Activated CD4-positive, alpha-beta T cell treated with anti-CD3 and anti-CD28 coated beads for 36 hours (primary cell): ENCODE measurements at regions of chr11 and their contacts with region 1.

Region 1: DNA sequence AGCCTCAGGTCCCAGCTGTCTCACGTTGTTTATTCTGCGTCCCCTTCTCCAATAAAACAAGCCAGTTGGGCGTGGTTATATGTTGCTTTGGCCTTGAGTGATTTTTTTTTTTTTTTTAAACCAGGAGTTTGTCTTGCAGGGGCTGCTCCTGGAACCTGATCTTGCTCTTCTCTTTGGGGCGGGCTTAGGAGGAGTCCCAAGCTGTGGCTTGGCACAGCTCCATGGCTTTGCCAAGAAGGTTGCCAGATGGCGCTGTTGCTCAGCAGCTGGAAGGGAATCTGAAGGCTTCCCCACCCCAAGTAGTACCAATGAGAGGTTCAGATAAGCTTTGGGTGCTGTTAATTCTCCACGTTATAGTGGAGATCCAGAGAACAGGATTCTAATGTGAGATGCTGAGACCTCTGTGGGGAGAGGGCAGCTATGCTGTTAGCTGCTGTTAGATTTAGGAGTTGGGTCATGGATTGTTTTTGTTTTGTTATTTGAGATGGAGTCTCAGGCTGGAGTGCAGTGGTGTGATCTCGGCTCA is 2.0 kb upstream of the FERMT3 start:
- DNase-seq: peak; percentile 90
- ATAC-seq: peak; percentile 30
- H3K4me3 Mint-ChIP-seq: peak overlapping the region; percentile 33
- H3K27ac Mint-ChIP-seq: peak overlapping the region; percentile 79
- H3K4me1 Mint-ChIP-seq: peaks cover 41% of the 10 kb centered on the region
- H3K27me3 Mint-ChIP-seq: no peaks in the 10 kb centered on the region

Region 2: GRCh38 chr11:64165849-64166635 is 38.5 kb before region 1 on chr11 and contains the start of gene MACROD1:
- CTCF ChIA-PET with region 1: interaction called, 3 read pairs
- POLR2A ChIA-PET with region 1: interaction called, 5 read pairs
- intact Hi-C with region 1: loop called in 1 of 2 experiments (anchors 2 kb)
- DNase-seq: peak; percentile 92
- ATAC-seq: peak; percentile 94
- H3K4me3 Mint-ChIP-seq: peak within 1 kb of the TSS; percentile 92
- H3K27ac Mint-ChIP-seq: peak within 1 kb of the TSS; percentile 83
- H3K4me1 Mint-ChIP-seq: peaks cover 9% of the 10 kb centered on the region
- H3K27me3 Mint-ChIP-seq: no peaks in the 10 kb centered on the region
- total RNA-seq, gene MACROD1: 26.4 to 28.6 TPM

Region 3: GRCh38 chr11:64225612-64226506 is 21.3 kb after region 1 on chr11 and contains the starts of genes NUDT22 and TRPT1:
- CTCF ChIA-PET with region 1: interaction called, 30 read pairs
- POLR2A ChIA-PET with region 1: interaction called, 28 read pairs
- intact Hi-C with region 1: loop called (anchors 1 kb)
- DNase-seq: peak; percentile 96
- ATAC-seq: peak; percentile 72
- H3K4me3 Mint-ChIP-seq: peak within 1 kb of the TSS; percentile 87
- H3K27ac Mint-ChIP-seq: peak within 1 kb of the TSS; percentile 85
- H3K4me1 Mint-ChIP-seq: peaks cover 32% of the 10 kb centered on the region
- H3K27me3 Mint-ChIP-seq: no peaks in the 10 kb centered on the region
- total RNA-seq, gene NUDT22: 61.8 to 74.1 TPM
- total RNA-seq, gene TRPT1: 23.9 to 27.1 TPM

Region 4: GRCh38 chr11:64246871-64247728 is 42.6 kb after region 1 on chr11 and contains the start of gene PPP1R14B:
- CTCF ChIA-PET with region 1: interaction called, 9 read pairs
- POLR2A ChIA-PET with region 1: interaction called, 5 read pairs
- intact Hi-C with region 1: loop called (anchors 1 kb)
- DNase-seq: peak; percentile 89
- ATAC-seq: peak; percentile 54
- H3K4me3 Mint-ChIP-seq: peak within 1 kb of the TSS; percentile 94
- H3K27ac Mint-ChIP-seq: peak within 1 kb of the TSS; percentile 92
- H3K4me1 Mint-ChIP-seq: peaks cover 34% of the 10 kb centered on the region
- H3K27me3 Mint-ChIP-seq: no peaks in the 10 kb centered on the region
- total RNA-seq, gene PPP1R14B: 261 to 267 TPM

Region 5: GRCh38 chr11:64341851-64342791 is 137.6 kb after region 1 on chr11:
- CTCF ChIA-PET with region 1: interaction called, 3 read pairs
- POLR2A ChIA-PET with region 1: no interaction called
- intact Hi-C with region 1: loop called in 1 of 2 experiments (anchors 1 kb)
- DNase-seq: peak; percentile 96
- ATAC-seq: peak; percentile 77
- H3K4me3 Mint-ChIP-seq: no peak overlapping the region
- H3K27ac Mint-ChIP-seq: no peak overlapping the region
- H3K4me1 Mint-ChIP-seq: peaks cover 28% of the 10 kb centered on the region
- H3K27me3 Mint-ChIP-seq: no peaks in the 10 kb centered on the region

Region 6: GRCh38 chr11:64366751-64367428 is 162.4 kb after region 1 on chr11:
- CTCF ChIA-PET with region 1: no interaction called
- POLR2A ChIA-PET with region 1: no interaction called
- intact Hi-C with region 1: no loop called
- DNase-seq: no peak
- ATAC-seq: no peak
- H3K4me3 Mint-ChIP-seq: no peak overlapping the region
- H3K27ac Mint-ChIP-seq: no peak overlapping the region
- H3K4me1 Mint-ChIP-seq: peaks cover 3% of the 10 kb centered on the region
- H3K27me3 Mint-ChIP-seq: no peaks in the 10 kb centered on the region